ENCODE measurements at regions of chr19 and their contacts with region 1.

Region 1: GRCh38 chr19:48020686-48021085 is 23.2 kb downstream of the CABP5 start:
- DNase-seq: no peak
- ATAC-seq: no peak

Region 2: GRCh38 chr19:46515879-46516350 is 1504.8 kb before region 1 on chr19:
- intact Hi-C with region 1: loop called (anchors 5 kb)
- DNase-seq: no peak
- ATAC-seq: no peak